ENCODE measurements at regions of chr4 and their contacts with region 1.

Region 1: GRCh38 chr4:1309261-1310010 is 19.7 kb downstream of the MAEA start:
- DNase-seq: peak; percentile 79 to 98 (median 84)

Region 2: GRCh38 chr4:825238-825835 is 484.1 kb before region 1 on chr4:
- intact Hi-C with region 1: no loop called
- DNase-seq: peak in 4 of 10 donors; percentile 35 to 85 (median 80)

Region 3: DNA sequence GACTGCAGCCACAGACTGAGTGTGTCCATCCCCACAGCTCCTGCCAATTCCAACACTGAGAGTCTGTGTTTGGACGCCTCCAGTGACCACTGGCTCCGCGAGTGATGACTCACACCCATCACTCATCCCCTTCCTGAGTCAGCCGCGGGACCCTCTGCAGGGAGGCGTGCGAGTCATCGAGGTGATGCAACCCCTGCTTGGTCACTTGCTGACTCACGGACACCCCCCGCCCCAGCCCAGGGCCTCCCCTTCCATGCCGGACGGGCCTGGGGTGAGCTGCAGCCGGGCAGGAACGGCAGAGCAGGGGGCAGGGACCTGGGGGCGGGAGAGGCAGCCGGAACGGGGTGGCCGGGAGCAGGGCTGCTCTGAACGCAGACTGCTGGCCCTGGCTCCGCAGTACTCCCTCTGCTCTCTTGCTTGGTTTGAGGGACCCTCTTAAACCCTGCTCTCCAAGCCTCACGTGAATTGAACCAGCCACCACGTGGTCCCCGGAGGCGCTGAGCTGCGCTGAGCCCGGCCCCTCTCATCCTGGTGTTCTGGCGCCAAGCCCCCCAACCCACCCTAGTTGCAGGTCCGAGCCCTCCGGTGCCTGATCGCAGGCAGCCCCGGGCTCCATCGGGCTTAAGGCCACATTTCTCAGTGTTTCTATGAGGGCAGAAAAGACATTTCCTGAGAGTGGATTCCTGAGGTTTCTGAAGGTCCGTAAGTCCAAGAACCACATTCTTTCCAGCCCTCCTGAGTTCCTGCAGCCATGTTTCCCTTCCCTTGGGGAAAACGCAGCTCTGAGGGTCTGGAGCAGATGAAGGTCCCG is 265.6 kb before region 1 on chr4:
- intact Hi-C with region 1: loop called (anchors 10 kb)
- DNase-seq: peak in 9 of 10 donors; percentile 37 to 96 (median 76)

Region 4: GRCh38 chr4:1512738-1513660 is 203.6 kb after region 1 on chr4:
- intact Hi-C with region 1: no loop called
- DNase-seq: peak in 6 of 10 donors; percentile 7 to 84 (median 54)

Measured in posterior cingulate gyrus (tissue), 11 donors.